GM13976 (cell line): ENCODE measurements at regions of chr12 and their contacts with region 1.

Region 1: GRCh38 chr12:113912760-113913329 is 53.3 kb downstream of the RBM19 start:
- DNase-seq: peak; percentile 81
- CTCF ChIP-seq: peak; percentile 74

Region 2: GRCh38 chr12:113184900-113185773 is 727.7 kb before region 1 on chr12 and contains the starts of genes DDX54 and RITA1:
- in situ Hi-C with region 1: loop called (anchors 25 kb)
- DNase-seq: peak; percentile 92
- CTCF ChIP-seq: no peak